Activated CD4-positive, alpha-beta T cell treated with anti-CD3 and anti-CD28 coated beads for 36 hours (primary cell): ENCODE measurements at regions of chr1 and their contacts with region 1.

Region 1: DNA sequence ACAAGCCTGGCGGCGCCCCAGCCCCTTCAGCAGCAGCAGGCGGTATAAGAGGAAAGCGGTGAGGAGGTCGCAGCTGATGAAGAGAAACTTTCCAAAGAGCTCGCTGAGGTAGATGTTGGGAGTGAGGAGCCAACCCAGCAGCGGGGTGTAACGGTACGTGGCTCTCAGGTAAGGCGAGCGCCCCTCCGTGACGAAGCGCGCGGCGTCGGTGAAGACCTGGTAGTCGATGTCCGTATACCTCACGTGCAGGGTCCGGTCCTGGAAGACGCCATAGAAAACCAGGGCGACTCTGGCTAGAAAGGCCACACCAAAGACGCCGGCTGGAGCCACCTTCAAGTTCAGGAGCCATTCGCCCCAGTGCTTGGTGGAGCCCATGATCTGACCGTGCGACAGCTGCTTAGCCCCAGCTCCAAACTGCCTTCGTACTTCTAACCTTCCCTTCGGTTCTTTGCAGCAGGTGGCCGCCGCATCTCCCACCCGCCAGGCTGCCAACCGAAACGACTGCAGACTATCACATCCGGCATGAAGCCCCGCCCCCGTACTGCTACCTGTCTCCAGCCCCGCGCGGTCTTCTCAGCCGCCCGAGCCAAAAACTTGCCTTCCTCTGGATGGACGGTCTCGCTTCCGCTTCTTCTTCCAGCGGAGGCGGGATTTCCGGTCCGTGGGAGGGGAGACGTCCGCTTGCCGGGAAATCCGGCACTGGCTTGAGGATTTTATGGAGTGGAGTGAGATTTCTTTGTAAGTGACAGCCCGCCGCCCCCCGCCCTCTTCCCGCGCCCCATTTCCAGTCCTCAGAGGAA is at the start of gene PIGM:
- DNase-seq: peak; percentile 97
- ATAC-seq: peak; percentile 96
- H3K4me3 Mint-ChIP-seq: peak within 1 kb of the TSS; percentile 96
- H3K27ac Mint-ChIP-seq: peak within 1 kb of the TSS; percentile 92
- H3K4me1 Mint-ChIP-seq: peaks cover 34% of the 10 kb centered on the region
- H3K27me3 Mint-ChIP-seq: no peaks in the 10 kb centered on the region
- total RNA-seq, gene PIGM: 4.3 to 4.7 TPM

Region 2: GRCh38 chr1:159780583-159781582 is 250.7 kb before region 1 on chr1 and contains the start of gene DUSP23:
- CTCF ChIA-PET with region 1: no interaction called
- POLR2A ChIA-PET with region 1: no interaction called
- intact Hi-C with region 1: loop called (anchors 1 kb)
- DNase-seq: peak; percentile 97
- ATAC-seq: peak; percentile 99
- H3K4me3 Mint-ChIP-seq: peak within 1 kb of the TSS; percentile 70
- H3K27ac Mint-ChIP-seq: peak within 1 kb of the TSS; percentile 14
- H3K4me1 Mint-ChIP-seq: peaks cover 12% of the 10 kb centered on the region
- H3K27me3 Mint-ChIP-seq: peaks cover 2% of the 10 kb centered on the region
- total RNA-seq, gene DUSP23: 23.9 to 26.8 TPM

Region 3: DNA sequence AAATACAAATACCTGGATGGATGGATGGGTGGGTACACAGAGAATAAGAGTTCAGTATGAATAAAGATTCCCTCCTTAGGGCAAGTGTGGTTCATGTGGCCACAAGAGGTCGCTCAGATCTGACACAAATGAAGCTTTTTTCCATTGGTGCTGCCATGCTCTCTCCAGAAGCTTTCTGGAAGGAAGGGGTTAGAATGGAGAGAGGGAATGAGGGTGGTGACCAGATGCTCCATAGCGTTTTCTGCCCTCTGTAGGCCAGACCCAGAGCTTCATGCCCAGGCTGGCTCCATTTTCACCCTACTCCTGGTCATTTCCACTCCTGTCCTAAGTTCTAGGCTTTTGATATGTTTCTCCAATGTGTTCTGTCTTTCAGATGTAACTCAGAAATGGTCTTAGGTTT is 232.7 kb before region 1 on chr1:
- CTCF ChIA-PET with region 1: no interaction called
- POLR2A ChIA-PET with region 1: no interaction called
- intact Hi-C with region 1: no loop called
- DNase-seq: peak; percentile 68
- ATAC-seq: peak; percentile 78
- H3K4me3 Mint-ChIP-seq: no peak overlapping the region
- H3K27ac Mint-ChIP-seq: no peak overlapping the region
- H3K4me1 Mint-ChIP-seq: peaks cover 12% of the 10 kb centered on the region
- H3K27me3 Mint-ChIP-seq: peaks cover 1% of the 10 kb centered on the region

Region 4: GRCh38 chr1:160046494-160047110 is 15.0 kb after region 1 on chr1:
- CTCF ChIA-PET with region 1: interaction called, 57 read pairs
- POLR2A ChIA-PET with region 1: interaction called, 5 read pairs
- intact Hi-C with region 1: no loop called
- DNase-seq: peak; percentile 67
- ATAC-seq: peak; percentile 87
- H3K4me3 Mint-ChIP-seq: peak overlapping the region; percentile 55
- H3K27ac Mint-ChIP-seq: peak overlapping the region; percentile 81
- H3K4me1 Mint-ChIP-seq: peaks cover 12% of the 10 kb centered on the region
- H3K27me3 Mint-ChIP-seq: peaks cover 13% of the 10 kb centered on the region

Region 5: GRCh38 chr1:160078512-160079195 is 47.1 kb after region 1 on chr1:
- CTCF ChIA-PET with region 1: interaction called, 29 read pairs
- POLR2A ChIA-PET with region 1: no interaction called
- intact Hi-C with region 1: loop called in 1 of 2 experiments (anchors 5 kb)
- DNase-seq: peak; percentile 84
- ATAC-seq: peak; percentile 93
- H3K4me3 Mint-ChIP-seq: no peak overlapping the region
- H3K27ac Mint-ChIP-seq: no peak overlapping the region
- H3K4me1 Mint-ChIP-seq: peaks cover 18% of the 10 kb centered on the region
- H3K27me3 Mint-ChIP-seq: peaks cover 48% of the 10 kb centered on the region

Region 6: DNA sequence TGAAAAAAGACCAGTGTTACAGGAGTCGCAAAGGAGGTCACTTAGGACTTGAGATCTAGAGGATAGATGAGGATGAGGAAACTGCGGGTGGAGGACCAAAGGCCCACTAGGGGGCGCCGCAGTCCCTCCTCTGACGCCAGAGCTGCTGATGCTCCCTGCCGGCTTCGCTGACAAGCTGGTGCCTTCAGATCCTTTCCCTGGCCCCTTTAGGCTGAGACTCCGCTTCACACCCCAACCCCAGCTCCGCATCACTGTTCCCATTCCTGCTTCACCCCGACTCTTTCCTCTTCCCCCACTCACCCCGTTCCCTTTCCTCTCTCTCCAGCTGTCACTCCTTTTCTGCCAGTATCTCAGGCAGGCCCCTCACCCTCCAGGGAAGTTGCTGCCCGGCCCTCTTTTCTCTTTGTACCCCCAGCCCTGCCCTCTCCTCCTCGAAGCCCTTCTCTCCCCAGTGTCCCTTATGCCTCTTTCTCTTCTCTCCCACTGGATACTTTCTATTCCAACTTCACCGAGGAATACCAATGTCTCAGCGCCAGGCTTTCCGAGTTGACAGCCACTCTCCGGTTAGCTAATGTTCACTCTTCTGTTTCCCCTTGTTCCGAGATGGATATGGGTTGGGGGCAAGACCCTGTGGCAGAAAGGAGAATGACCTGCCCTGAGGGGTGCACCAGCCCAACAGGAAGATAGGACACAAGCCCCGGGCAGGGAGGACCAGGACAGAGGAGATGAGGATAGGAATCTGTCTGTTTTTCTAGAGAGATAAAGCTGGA is 54.3 kb after region 1 on chr1:
- CTCF ChIA-PET with region 1: interaction called, 18 read pairs
- POLR2A ChIA-PET with region 1: no interaction called
- intact Hi-C with region 1: loop called (anchors 2 to 5 kb)
- DNase-seq: peak; percentile 91
- ATAC-seq: peak; percentile 76
- H3K4me3 Mint-ChIP-seq: no peak overlapping the region
- H3K27ac Mint-ChIP-seq: no peak overlapping the region
- H3K4me1 Mint-ChIP-seq: peaks cover 12% of the 10 kb centered on the region
- H3K27me3 Mint-ChIP-seq: peaks cover 20% of the 10 kb centered on the region

Region 7: DNA sequence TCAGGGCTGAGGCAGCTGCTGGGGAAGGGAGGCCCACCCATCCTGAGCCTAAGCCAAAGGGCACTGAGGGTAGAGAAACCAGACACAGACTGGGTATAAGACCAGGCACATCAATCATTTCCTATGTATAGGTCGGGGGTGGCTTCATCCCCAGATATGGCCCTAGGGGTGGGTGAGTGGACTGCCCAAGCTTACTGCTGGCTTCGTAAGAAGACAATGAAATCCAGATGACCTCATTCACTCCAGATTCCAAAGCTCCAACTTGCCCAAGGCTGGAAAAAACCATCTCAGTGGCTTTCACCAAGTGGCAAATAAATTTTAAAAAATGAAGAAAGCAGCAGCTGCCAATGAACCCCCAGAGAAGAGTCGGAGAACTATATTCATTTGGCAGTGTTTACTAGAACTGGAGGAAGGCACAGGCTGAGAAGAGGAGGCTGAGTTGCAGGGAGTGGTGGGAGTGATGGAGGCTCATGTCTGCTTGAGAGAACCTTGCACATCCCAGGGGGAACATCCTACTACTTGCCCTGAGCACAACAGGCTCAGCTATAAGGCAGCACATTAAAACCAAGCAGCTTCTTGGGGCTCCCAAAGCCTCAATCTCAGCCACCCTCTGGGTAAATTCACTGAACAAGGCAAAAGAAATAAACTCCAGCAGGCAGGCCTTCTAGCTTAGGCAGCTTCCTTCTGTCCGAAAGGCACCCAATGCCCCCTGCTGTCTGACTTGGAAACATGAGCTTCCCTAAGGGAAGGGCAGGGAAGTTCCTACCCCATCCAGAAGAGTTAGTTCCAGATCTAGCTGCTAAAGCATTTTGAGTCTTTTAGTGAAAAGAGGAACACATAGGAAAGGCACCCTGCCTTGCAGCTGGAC is 187.7 kb after region 1 on chr1:
- CTCF ChIA-PET with region 1: no interaction called
- POLR2A ChIA-PET with region 1: no interaction called
- intact Hi-C with region 1: no loop called
- DNase-seq: no peak
- ATAC-seq: no peak
- H3K4me3 Mint-ChIP-seq: no peak overlapping the region
- H3K27ac Mint-ChIP-seq: no peak overlapping the region
- H3K4me1 Mint-ChIP-seq: no peaks in the 10 kb centered on the region
- H3K27me3 Mint-ChIP-seq: no peaks in the 10 kb centered on the region

Region 8: DNA sequence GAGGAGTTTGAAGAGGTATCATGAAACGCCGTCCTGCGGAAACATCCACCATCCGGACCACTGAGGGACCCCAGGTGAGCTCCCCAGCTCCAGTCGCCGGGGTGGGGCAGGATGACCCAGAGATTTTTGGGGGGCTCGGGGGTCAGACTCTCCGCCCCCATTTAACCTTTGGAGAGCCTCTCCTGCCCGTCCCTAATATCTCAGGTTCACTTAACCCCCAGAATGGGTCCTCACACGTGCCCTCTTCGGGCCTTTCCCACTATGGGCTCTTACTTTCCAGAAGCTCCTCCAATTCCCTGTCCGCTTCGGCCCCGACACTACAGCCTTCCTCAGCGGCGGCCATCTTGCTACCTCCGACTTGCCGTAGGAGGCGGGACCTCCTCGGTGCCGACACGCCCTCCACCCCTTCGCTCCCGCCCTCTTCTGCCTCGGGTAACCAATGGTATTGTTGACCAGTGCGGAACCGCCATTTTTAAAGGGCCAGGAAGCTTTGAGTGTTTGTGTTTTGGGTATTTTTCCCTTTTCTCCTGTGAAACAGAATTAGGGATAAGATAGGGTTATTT is 253.3 kb after region 1 on chr1 and contains the start of gene PEX19:
- CTCF ChIA-PET with region 1: no interaction called
- POLR2A ChIA-PET with region 1: no interaction called
- intact Hi-C with region 1: loop called in 1 of 2 experiments (anchors 1 kb)
- DNase-seq: peak; percentile 97
- ATAC-seq: peak; percentile 99
- H3K4me3 Mint-ChIP-seq: peak within 1 kb of the TSS; percentile 86
- H3K27ac Mint-ChIP-seq: peak within 1 kb of the TSS; percentile 94
- H3K4me1 Mint-ChIP-seq: peaks cover 18% of the 10 kb centered on the region
- H3K27me3 Mint-ChIP-seq: no peaks in the 10 kb centered on the region
- total RNA-seq, gene PEX19: 49.2 to 55.8 TPM